ENCODE measurements at regions of chr2 and their contacts with region 1.

Region 1: GRCh38 chr2:21317131-21317530 is 193.4 kb downstream of the TDRD15 start:
- DNase-seq: peak; percentile 36 to 61 (median 46)
- H3K4me3 ChIP-seq: no peak overlapping the region
- H3K27ac ChIP-seq: no peak overlapping the region
- H3K4me1 ChIP-seq: peaks cover 2% of the 10 kb centered on the region
- H3K27me3 ChIP-seq: no peaks in the 10 kb centered on the region
- CTCF ChIP-seq: peak; percentile 44 to 58 (median 51)
- EP300 ChIP-seq: no peak
- POLR2A ChIP-seq: no peak

Region 2: DNA sequence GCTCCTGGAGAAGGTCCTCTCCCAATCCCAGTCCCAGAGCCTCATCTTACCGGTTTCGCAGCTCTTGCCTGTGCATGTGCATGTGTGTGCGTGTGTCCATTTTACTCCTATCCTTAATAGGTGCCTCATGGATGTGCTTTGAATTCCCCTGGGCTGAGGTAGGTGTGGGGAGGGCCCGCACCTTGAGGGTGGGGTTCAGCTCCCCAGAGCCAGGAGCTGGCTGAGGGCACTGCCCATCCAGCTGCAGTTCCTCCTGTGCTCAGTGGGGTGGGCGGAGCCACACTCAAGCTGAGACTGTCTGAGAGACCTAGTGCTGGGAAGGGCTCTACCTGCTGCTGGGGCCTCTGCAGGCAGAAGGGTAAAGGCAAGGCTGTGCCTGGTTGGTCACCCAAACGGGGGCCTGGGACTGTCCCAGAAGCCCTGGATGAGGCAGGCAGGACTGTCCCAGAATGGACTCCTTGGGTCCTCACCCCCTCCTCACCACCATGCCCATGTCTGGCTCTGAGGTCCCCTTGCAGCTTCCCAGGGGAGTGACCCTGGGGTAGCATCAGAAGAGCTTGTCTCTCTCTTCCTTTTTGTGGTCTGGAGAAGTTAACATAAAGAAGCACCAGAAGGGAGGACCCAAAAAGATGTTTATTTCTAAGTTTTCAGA is 641.3 kb before region 1 on chr2:
- intact Hi-C with region 1: no loop called
- DNase-seq: no peak
- H3K4me3 ChIP-seq: no peak overlapping the region
- H3K27ac ChIP-seq: no peak overlapping the region
- H3K4me1 ChIP-seq: no peaks in the 10 kb centered on the region
- H3K27me3 ChIP-seq: peaks cover 5% of the 10 kb centered on the region
- CTCF ChIP-seq: no peak
- EP300 ChIP-seq: no peak
- POLR2A ChIP-seq: no peak

Region 3: GRCh38 chr2:21042958-21043743 is 274.0 kb before region 1 on chr2:
- intact Hi-C with region 1: loop called in 2 of 4 experiments (anchors 5 to 10 kb)
- DNase-seq: peak; percentile 52 to 84 (median 66)
- H3K4me3 ChIP-seq: no peak overlapping the region
- H3K27ac ChIP-seq: peak overlapping the region in 1 of 2 donors; percentile 8
- H3K4me1 ChIP-seq: peaks cover 9% of the 10 kb centered on the region
- H3K27me3 ChIP-seq: no peaks in the 10 kb centered on the region
- CTCF ChIP-seq: peak; percentile 77 to 96 (median 89)
- EP300 ChIP-seq: no peak
- POLR2A ChIP-seq: no peak

Region 4: GRCh38 chr2:21123473-21124393 is 193.4 kb before region 1 on chr2 and contains the start of gene TDRD15:
- intact Hi-C with region 1: no loop called
- DNase-seq: no peak
- H3K4me3 ChIP-seq: no peak within 1 kb of the TSS
- H3K27ac ChIP-seq: no peak within 1 kb of the TSS
- H3K4me1 ChIP-seq: no peaks in the 10 kb centered on the region
- H3K27me3 ChIP-seq: no peaks in the 10 kb centered on the region
- CTCF ChIP-seq: no peak
- EP300 ChIP-seq: no peak
- POLR2A ChIP-seq: no peak
- total RNA-seq, gene TDRD15: 0.23 TPM in 1 of 7 donors, not detected in the others

Region 5: GRCh38 chr2:21175895-21176646 is 141.1 kb before region 1 on chr2:
- intact Hi-C with region 1: loop called (anchors 2 to 10 kb)
- DNase-seq: no peak
- H3K4me3 ChIP-seq: no peak overlapping the region
- H3K27ac ChIP-seq: no peak overlapping the region
- H3K4me1 ChIP-seq: no peaks in the 10 kb centered on the region
- H3K27me3 ChIP-seq: no peaks in the 10 kb centered on the region
- CTCF ChIP-seq: peak; percentile 27 to 61 (median 37)
- EP300 ChIP-seq: no peak
- POLR2A ChIP-seq: no peak